OCI-LY7 (cell line): ENCODE measurements at regions of chr1 and their contacts with region 1.

Region 1: DNA sequence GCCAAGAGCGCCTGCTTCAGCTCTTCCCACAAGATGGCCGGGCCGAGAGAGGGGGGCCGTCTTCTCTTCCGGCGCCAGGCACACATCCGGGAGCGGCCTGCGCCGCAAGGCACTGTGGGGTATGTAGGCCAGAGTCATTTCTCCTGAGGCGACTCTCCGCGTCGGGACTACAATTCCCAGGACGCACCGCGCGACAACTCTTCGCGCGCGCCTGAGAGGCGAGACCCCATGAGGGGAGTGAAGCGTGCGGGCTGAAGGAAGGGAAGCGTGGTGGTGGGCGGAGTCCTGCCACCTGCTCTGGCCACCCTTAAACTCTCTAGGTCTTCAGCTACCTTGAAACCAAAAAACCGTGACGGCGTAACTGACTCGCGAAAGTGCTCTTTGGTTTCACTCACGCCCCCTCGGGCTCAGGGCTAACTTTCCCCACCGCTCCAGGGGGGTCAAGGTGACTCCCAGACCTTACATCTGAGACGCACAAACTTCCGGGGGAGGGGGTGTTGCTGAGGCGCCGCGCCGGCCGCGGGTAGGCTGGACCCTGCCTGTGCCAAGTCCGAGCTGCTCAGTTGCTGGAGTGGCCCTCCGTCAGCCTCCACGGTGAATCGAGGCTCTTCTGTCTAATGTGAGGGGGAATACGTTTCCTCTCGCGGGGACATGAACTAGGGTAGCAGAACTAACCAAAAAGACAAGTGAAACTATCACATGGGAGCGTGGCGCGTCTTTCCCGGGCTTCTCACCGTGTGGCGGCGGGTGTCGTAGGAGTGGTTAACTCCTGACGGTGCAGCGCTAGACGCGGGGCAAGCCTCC is at the start of gene SERBP1:
- DNase-seq: peak; percentile 99
- H3K4me3 ChIP-seq: peak within 1 kb of the TSS; percentile 99
- H3K27ac ChIP-seq: peak within 1 kb of the TSS; percentile 96
- H3K4me1 ChIP-seq: peaks cover 38% of the 10 kb centered on the region
- CTCF ChIP-seq: no peak; the same call in 1 of the 2 replicates
- total RNA-seq, gene SERBP1: 270 and 443 TPM in 2 replicates

Region 2: DNA sequence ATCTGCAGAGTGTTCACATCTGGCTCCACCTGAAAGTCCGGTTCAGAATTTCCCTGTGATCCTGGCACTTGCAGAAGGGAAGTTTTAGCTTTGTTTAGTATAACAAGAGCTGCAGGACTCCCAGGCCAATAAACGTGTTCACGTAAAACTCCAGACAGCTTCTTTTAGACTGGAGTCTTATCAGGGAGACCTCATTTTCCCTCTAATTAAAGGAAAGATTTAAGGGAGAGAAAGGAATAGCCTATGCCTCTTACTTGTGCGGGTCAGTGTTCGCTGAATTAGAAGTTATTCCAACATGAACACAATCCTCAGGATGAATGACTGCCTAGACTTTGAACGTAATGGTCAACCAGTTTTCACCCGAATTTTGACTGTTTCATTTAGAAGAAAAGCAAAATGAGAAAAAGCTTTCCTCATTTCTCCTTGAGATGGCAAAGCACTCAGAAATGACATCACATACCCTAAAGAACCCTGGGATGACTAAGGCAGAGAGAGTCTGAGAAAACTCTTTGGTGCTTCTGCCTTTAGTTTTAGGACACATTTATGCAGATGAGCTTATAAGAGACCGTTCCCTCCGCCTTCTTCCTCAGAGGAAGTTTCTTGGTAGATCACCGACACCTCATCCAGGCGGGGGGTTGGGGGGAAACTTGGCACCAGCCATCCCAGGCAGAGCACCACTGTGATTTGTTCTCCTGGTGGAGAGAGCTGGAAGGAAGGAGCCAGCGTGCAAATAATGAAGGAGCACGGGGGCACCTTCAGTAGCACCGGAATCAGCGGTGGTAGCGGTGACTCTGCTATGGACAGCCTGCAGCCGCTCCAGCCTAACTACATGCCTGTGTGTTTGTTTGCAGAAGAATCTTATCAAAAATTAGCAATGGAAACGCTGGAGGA is 1098.7 kb before region 1 on chr1:
- CTCF ChIA-PET with region 1: no interaction called
- POLR2A ChIA-PET with region 1: no interaction called
- intact Hi-C with region 1: loop called (anchors 2 kb)
- DNase-seq: peak; percentile 61
- H3K4me3 ChIP-seq: peak overlapping the region; percentile 77
- H3K27ac ChIP-seq: peak overlapping the region; percentile 93
- H3K4me1 ChIP-seq: peaks cover 71% of the 10 kb centered on the region
- CTCF ChIP-seq: no peak

Region 3: GRCh38 chr1:67053785-67054772 is 376.5 kb before region 1 on chr1 and contains the start of gene SLC35D1:
- CTCF ChIA-PET with region 1: no interaction called
- POLR2A ChIA-PET with region 1: interaction called, 3 read pairs
- intact Hi-C with region 1: loop called (anchors 5 kb)
- DNase-seq: peak; percentile 91
- H3K4me3 ChIP-seq: peak within 1 kb of the TSS; percentile 89
- H3K27ac ChIP-seq: peak within 1 kb of the TSS; percentile 76
- H3K4me1 ChIP-seq: peaks cover 20% of the 10 kb centered on the region
- CTCF ChIP-seq: no peak
- total RNA-seq, gene SLC35D1: 10.8 and 11.2 TPM in 2 replicates

Region 4: DNA sequence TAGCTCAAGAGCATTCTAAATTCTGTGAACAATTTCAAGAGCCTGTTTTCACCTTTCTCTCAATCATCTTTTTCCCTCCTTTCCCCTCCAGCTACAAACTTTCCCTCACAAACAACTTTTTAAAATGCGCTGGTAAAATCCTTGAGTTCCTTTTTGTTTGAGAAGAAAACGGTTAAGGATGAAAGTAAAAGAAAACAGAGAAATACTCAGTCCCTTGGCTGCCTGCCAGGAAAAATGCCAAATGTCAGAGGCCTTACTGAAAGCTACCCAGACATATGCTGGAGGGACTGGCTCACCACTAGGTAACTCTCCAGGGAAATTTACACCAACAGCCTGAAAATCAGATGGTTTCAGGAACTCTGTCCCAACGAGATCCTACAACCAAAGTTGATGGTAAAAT is 10.6 kb after region 1 on chr1:
- CTCF ChIA-PET with region 1: no interaction called
- POLR2A ChIA-PET with region 1: interaction called, 18 read pairs
- intact Hi-C with region 1: no loop called
- DNase-seq: peak; percentile 22
- H3K4me3 ChIP-seq: no peak overlapping the region
- H3K27ac ChIP-seq: no peak overlapping the region
- H3K4me1 ChIP-seq: peaks cover 9% of the 10 kb centered on the region
- CTCF ChIP-seq: no peak

Region 5: DNA sequence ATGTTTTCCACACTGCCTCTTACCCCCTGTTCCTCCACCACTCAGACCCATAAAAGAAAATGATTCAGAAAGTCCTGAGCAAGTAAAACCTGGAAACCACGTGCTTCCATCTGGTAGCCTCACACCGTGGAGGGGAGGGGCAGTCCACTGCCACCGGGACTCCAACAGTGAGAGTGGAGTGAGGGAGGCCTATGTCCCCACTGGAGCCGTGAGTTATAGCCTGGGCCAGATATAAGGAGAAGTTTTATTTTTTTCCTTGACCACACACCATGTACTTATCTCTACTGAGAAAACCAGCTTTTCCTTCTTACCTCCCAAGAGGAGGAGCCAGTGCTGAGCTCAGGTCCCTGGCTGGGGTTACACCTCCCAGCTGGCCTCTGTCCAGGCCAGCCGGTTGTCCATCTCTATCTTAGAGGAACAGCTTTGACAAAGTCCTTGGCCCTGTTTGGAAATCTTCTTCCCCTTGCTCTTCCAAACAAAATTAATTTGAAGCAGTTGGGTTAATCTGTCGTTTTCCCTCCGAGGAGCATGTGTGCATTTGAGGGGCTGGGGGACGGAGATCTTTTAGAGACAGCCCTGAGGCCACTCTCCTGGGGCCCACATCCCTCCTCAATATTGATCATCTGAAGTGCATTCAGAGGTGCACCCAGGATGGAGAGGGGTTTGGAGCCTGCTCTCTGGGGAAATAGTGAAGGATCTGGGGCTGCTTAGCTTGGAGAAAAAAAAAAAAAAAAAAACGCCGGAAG is 48.8 kb after region 1 on chr1:
- CTCF ChIA-PET with region 1: no interaction called
- POLR2A ChIA-PET with region 1: no interaction called
- intact Hi-C with region 1: no loop called
- DNase-seq: no peak
- H3K4me3 ChIP-seq: no peak overlapping the region
- H3K27ac ChIP-seq: no peak overlapping the region
- H3K4me1 ChIP-seq: no peaks in the 10 kb centered on the region
- CTCF ChIP-seq: no peak

Region 6: DNA sequence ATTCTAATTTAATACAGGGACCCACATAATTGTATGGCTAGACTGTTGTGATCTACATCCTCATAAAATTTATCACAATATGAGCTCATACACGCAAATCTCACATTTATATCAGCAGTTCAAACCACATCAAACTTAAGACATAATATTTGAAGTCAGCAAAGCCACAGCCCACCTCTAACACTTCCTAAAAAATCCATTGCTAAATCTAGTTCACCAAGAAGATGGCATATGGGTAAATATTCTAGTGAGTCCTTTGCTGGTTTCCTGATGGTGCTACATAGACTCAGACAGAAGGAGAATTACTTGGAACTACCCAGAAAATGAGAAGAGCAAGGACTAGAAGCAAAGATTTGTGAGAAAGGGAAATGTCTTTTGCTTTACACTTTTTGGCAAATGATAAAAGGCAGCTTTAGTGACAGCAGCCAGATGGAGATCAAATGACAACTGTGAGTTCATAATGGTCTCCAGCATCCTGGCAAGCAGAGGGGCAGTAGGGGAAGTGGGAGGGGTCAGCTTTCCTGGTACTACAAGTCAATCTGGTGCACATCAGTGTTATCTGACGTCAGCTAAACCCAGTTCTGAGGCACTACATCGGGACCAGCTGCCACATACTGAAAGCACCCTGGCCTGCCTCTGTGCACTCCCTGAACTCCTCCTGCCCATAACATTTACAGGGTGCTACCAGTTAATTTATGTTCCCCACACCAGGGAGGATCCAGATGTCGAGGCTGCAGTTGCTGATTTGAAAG is 243.9 kb after region 1 on chr1:
- CTCF ChIA-PET with region 1: interaction called, 10 read pairs
- POLR2A ChIA-PET with region 1: interaction called, 3 read pairs
- intact Hi-C with region 1: no loop called
- DNase-seq: peak; percentile 77
- H3K4me3 ChIP-seq: peak overlapping the region; percentile 20
- H3K27ac ChIP-seq: peak overlapping the region; percentile 85
- H3K4me1 ChIP-seq: peaks cover 48% of the 10 kb centered on the region
- CTCF ChIP-seq: no peak

Region 7: DNA sequence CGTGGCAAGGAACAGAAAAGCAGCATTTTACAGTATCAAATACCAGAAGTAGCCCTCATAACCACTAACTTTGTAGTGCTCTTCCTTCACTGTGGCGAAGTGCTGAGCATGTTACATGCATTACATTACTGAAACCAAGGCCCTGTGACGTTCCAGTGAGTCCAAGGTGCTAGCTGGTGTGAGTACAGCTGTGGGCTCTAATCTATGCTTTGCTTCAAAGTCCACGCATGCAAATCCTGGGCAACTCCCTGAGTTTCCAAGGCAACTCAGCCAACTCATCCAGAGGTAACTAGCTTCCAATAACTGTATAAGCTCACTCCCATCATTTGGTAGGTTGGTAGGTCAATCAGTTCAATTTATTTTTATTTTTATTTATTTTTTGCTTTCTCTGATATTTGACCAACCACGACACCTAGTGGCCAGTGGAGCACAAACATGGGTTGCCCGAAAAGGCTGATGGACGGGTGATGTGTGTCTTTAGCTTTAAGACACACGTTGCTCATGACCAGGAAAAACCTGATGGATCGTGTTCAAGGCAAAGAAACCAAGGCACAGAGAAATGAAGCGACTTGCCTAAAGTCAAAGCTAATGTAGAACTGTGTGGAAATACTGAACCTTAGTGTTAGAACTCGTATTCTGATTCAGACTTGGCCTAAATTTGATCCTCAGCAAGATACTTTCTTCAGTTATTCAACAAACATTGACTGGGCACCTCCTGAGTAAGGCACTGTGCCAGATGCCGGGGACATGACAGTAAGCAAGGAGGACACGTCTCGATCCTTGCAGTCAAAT is 329.7 kb after region 1 on chr1:
- CTCF ChIA-PET with region 1: no interaction called
- POLR2A ChIA-PET with region 1: no interaction called
- intact Hi-C with region 1: loop called (anchors 5 kb)
- DNase-seq: peak; percentile 84
- H3K4me3 ChIP-seq: no peak overlapping the region
- H3K27ac ChIP-seq: peak overlapping the region; percentile 39
- H3K4me1 ChIP-seq: peaks cover 30% of the 10 kb centered on the region
- CTCF ChIP-seq: peak; percentile 100